ENCODE measurements at regions of chr9 and their contacts with region 1.

Region 1: GRCh38 chr9:34603610-34604231 is 8.2 kb downstream of the RPP25L start:
- DNase-seq: peak; percentile 57 to 80
- ATAC-seq: peak; percentile 92 to 93
- H3K4me3 ChIP-seq: no peak overlapping the region
- H3K27ac ChIP-seq: peak overlapping the region in 3 of 4 donors; percentile 40 to 53 (median 41)
- H3K4me1 ChIP-seq: no peaks in the 10 kb centered on the region
- H3K27me3 ChIP-seq: no peaks in the 10 kb centered on the region
- CTCF ChIP-seq: peak; percentile 90 to 94 (median 93)
- POLR2A ChIP-seq: no peak

Region 2: GRCh38 chr9:34403554-34404380 is 200.0 kb before region 1 on chr9:
- in situ Hi-C with region 1: loop called (anchors 10 kb)
- intact Hi-C with region 1: no loop called
- DNase-seq: peak; percentile 42 to 68
- ATAC-seq: peak; percentile 70 to 79
- H3K4me3 ChIP-seq: no peak overlapping the region
- H3K27ac ChIP-seq: no peak overlapping the region
- H3K4me1 ChIP-seq: peaks cover 0 to 3% of the 10 kb centered on the region in 2 donors
- H3K27me3 ChIP-seq: no peaks in the 10 kb centered on the region
- CTCF ChIP-seq: peak; percentile 90 to 98 (median 95)
- POLR2A ChIP-seq: no peak

Region 3: DNA sequence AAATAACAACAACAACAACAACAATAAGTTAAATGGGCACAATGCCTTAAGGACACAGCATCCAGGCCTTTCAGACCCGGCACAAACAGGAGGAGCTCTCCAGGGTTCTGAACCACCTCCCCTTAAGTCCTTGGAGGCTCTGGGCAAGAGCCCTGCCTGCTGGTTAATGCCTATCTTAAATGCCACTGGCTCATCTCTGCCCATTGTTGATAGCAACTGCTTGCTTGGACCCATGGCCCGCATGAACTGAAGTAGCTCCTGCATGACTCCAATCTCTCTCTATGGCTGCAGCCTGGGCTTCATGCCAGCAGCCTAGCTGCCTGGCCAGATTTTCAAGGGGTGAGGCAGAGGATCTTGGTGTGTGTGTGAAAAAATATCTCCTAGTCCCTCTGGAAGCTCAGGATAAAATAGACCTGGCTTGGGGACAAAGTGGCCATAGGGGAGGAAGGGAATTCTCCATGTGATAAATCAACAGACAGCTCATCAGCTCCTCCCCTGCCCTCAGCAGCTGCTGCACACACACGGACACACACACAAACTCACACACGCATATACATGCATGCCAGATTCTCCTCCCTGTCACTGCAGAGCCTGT is 172.8 kb before region 1 on chr9:
- in situ Hi-C with region 1: no loop called
- intact Hi-C with region 1: no loop called
- DNase-seq: peak; percentile 56 to 87
- ATAC-seq: peak; percentile 91 to 93
- H3K4me3 ChIP-seq: no peak overlapping the region
- H3K27ac ChIP-seq: peak overlapping the region in 2 of 4 donors; percentile 61 to 71
- H3K4me1 ChIP-seq: peaks cover 20 to 39% of the 10 kb centered on the region in 2 donors
- H3K27me3 ChIP-seq: no peaks in the 10 kb centered on the region
- CTCF ChIP-seq: no peak
- POLR2A ChIP-seq: no peak

Region 4: GRCh38 chr9:34458013-34458958 is 145.4 kb before region 1 on chr9 and contains the starts of genes DNAI1 and FAM219A:
- in situ Hi-C with region 1: no loop called
- intact Hi-C with region 1: loop called (anchors 5 kb)
- DNase-seq: peak; percentile 98
- ATAC-seq: peak; percentile 89 to 92
- H3K4me3 ChIP-seq: peak within 1 kb of the TSS; percentile 68 to 95 (median 80)
- H3K27ac ChIP-seq: peak within 1 kb of the TSS; percentile 79 to 94 (median 90)
- H3K4me1 ChIP-seq: peaks cover 38 to 53% of the 10 kb centered on the region in 2 donors
- H3K27me3 ChIP-seq: no peaks in the 10 kb centered on the region
- CTCF ChIP-seq: no peak
- POLR2A ChIP-seq: peak; percentile 97 to 98
- total RNA-seq, gene DNAI1: 0.49 TPM in 1 of 4 donors, not detected in the others
- total RNA-seq, gene FAM219A: 29.5 to 58.4 (median 41.8) TPM

Region 5: GRCh38 chr9:34554211-34555001 is 49.3 kb before region 1 on chr9:
- in situ Hi-C with region 1: loop called in 3 of 4 experiments (anchors 5 kb)
- intact Hi-C with region 1: no loop called
- DNase-seq: no peak
- ATAC-seq: no peak
- H3K4me3 ChIP-seq: no peak overlapping the region
- H3K27ac ChIP-seq: peak overlapping the region in 2 of 4 donors; percentile 49 to 56
- H3K4me1 ChIP-seq: peaks cover 30% of the 10 kb centered on the region in 2 donors
- H3K27me3 ChIP-seq: no peaks in the 10 kb centered on the region
- CTCF ChIP-seq: no peak
- POLR2A ChIP-seq: no peak

Region 6: GRCh38 chr9:34559624-34560452 is 43.9 kb before region 1 on chr9:
- in situ Hi-C with region 1: loop called in 1 of 4 experiments (anchors 5 kb)
- intact Hi-C with region 1: no loop called
- DNase-seq: peak; percentile 59 to 92
- ATAC-seq: peak; percentile 62 to 66
- H3K4me3 ChIP-seq: peak overlapping the region in 3 of 4 donors; percentile 14 to 33 (median 31)
- H3K27ac ChIP-seq: peak overlapping the region; percentile 92 to 97 (median 93)
- H3K4me1 ChIP-seq: peaks cover 48 to 67% of the 10 kb centered on the region in 2 donors
- H3K27me3 ChIP-seq: no peaks in the 10 kb centered on the region
- CTCF ChIP-seq: no peak
- POLR2A ChIP-seq: no peak

Measured in gastrocnemius medialis (tissue), 4 donors.